Dorsolateral prefrontal cortex (tissue), 120 donors: ENCODE measurements at regions of chr19 and their contacts with region 1.

Region 1: GRCh38 chr19:14517840-14518505 is at the start of gene DNAJB1:
- DNase-seq: peak; percentile 63 to 90 (median 78)
- H3K4me3 ChIP-seq: peak within 1 kb of the TSS; percentile 77 to 100 (median 97)
- H3K27ac ChIP-seq: peak within 1 kb of the TSS; percentile 99 to 100 (median 100)
- H3K27me3 ChIP-seq: no peaks in the 10 kb centered on the region
- CTCF ChIP-seq: peak in 6 of 56 donors; percentile 2 to 42 (median 16)
- total RNA-seq, gene DNAJB1: 67.5 to 1,486 (median 107) TPM

Region 2: DNA sequence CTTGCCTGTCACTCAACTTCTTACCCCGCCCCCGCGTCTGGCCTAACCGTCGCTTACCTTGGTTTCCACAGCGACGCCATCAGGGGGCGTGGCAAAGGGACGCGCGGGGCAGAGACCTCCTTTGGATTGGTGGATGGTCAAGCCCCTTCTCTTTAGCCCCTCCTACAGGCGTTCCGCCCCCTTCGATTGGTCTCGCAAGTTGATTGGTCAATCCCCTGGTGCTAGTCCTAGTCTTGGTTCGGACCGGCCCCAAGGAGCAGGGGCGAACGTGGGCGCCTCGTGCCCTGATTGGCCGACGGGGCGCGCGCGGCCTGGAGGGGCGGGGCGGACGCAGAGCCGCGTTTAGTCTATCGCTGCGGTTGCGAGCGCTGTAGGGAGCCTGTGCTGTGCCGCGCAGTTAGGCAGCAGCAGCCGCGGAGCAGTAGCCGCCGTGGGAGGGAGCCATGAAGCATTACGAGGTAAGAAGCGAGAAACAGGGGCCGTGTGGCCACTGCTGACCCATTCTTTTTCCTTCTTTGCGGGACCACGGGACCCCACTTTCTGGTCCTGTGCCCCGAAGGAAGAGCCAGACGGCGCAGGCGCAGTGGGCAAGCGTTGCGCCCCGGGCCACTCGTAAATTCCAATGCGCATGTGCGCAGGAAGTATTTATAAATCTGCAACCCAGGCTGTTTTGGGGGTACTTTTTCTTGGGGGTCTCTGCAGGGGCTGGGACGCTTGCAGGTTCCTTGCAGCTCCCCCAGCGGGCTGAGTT is 11.5 kb after region 1 on chr19 and contains the start of gene TECR:
- intact Hi-C with region 1: loop called (anchors 1 kb)
- DNase-seq: peak; percentile 99 to 100 (median 100)
- H3K4me3 ChIP-seq: peak within 1 kb of the TSS; percentile 61 to 100 (median 92)
- H3K27ac ChIP-seq: peak within 1 kb of the TSS; percentile 80 to 99 (median 95)
- H3K27me3 ChIP-seq: no peaks in the 10 kb centered on the region
- CTCF ChIP-seq: peak in 39 of 56 donors; percentile 8 to 63 (median 38)
- total RNA-seq, gene TECR: 169 to 287 (median 205) TPM

Region 3: GRCh38 chr19:14542711-14543328 is 24.8 kb after region 1 on chr19:
- intact Hi-C with region 1: no loop called
- DNase-seq: peak in 1 of 10 donors; percentile 42
- H3K4me3 ChIP-seq: no peak overlapping the region
- H3K27ac ChIP-seq: peak overlapping the region; percentile 20 to 100 (median 84)
- H3K27me3 ChIP-seq: no peaks in the 10 kb centered on the region
- CTCF ChIP-seq: no peak

Region 4: GRCh38 chr19:14556662-14557188 is 38.8 kb after region 1 on chr19:
- intact Hi-C with region 1: loop called (anchors 5 kb)
- DNase-seq: peak; percentile 73 to 87 (median 79)
- H3K4me3 ChIP-seq: peak overlapping the region in 53 of 59 donors; percentile 1 to 56 (median 31)
- H3K27ac ChIP-seq: peak overlapping the region in 58 of 59 donors; percentile 20 to 97 (median 86)
- H3K27me3 ChIP-seq: no peaks in the 10 kb centered on the region
- CTCF ChIP-seq: peak; percentile 72 to 98 (median 95)

Region 5: DNA sequence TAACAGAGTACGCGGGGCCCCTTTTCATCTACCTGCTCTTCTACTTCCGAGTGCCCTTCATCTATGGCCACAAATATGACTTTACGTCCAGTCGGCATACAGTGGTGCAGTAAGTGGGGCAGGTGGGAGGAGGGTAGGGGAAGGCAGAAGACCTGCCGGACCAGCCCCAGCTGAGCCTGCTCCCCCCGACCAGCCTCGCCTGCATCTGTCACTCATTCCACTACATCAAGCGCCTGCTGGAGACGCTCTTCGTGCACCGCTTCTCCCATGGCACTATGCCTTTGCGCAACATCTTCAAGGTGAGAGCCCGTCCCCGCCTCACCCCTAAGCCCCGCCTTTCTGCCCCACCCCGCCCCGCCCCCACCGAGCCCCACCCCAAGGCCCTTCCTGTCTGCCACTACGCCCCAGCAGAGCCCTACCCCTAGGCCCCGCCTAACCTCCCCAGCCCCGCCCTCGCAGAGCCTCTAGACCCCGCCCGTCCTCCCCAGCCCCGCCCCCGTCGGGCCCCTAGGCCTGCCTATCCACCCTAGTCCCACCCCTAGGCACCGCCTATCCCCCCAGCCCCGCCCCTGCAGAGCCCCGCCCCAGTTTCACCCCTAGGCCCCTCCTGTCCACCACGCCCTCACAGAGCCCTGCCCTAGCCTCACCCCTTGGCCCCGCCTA is 46.1 kb after region 1 on chr19:
- intact Hi-C with region 1: loop called (anchors 5 kb)
- DNase-seq: no peak
- H3K4me3 ChIP-seq: no peak overlapping the region
- H3K27ac ChIP-seq: peak overlapping the region in 35 of 59 donors; percentile 13 to 97 (median 94)
- H3K27me3 ChIP-seq: no peaks in the 10 kb centered on the region
- CTCF ChIP-seq: no peak